Psoas muscle (tissue), 8 donors: ENCODE measurements at regions of chr6 and their contacts with region 1.

Region 1: DNA sequence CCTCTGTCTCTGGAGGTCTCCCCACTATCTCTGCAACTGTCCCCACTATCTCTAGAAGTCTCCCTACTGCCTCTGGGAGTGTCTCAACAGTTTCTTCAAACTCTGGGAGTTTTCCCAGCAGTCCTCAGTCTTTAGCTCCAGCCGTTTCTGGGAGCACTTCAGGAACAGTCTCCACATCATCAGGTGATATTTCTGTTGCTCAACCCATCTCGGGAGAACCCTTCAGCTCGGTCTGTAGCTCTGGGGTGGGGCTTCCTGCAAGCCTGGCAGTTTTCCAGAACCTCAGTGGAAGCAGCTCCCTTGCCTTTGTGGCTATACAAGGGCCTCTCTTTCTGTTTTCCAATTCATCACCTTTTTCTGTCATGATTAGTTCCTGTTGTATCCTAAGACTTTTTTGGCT is 3.0 kb upstream of the SFTA2 start:
- DNase-seq: no peak
- ATAC-seq: no peak
- H3K4me3 ChIP-seq: no peak overlapping the region
- H3K27ac ChIP-seq: no peak overlapping the region
- H3K4me1 ChIP-seq: no peaks in the 10 kb centered on the region
- H3K27me3 ChIP-seq: peaks cover 0 to 3% (median 0%) of the 10 kb centered on the region in 3 donors
- CTCF ChIP-seq: no peak

Region 2: GRCh38 chr6:31049518-31049917 is 114.5 kb after region 1 on chr6:
- intact Hi-C with region 1: loop called in 1 of 2 experiments (anchors 5 kb)
- DNase-seq: no peak
- ATAC-seq: no peak
- H3K4me3 ChIP-seq: no peak overlapping the region
- H3K27ac ChIP-seq: no peak overlapping the region
- H3K4me1 ChIP-seq: no peaks in the 10 kb centered on the region
- H3K27me3 ChIP-seq: peaks cover 0 to 5% (median 0%) of the 10 kb centered on the region in 3 donors
- CTCF ChIP-seq: no peak